ENCODE measurements at regions of chr1 and their contacts with region 1.

Region 1: GRCh38 chr1:58546520-58547308 is at the start of gene OMA1:
- DNase-seq: peak; percentile 97
- H3K4me3 ChIP-seq: peak within 1 kb of the TSS; percentile 19 to 73 (median 71)
- H3K27ac ChIP-seq: peak within 1 kb of the TSS; percentile 100
- H3K4me1 ChIP-seq: peaks cover 3 to 9% of the 10 kb centered on the region in 2 donors
- H3K27me3 ChIP-seq: no peaks in the 10 kb centered on the region
- CTCF ChIP-seq: peak; percentile 95 to 99 (median 97)
- POLR2A ChIP-seq: peak; percentile 81 to 95
- total RNA-seq, gene OMA1: 50.6 to 67.6 (median 58.5) TPM

Region 2: DNA sequence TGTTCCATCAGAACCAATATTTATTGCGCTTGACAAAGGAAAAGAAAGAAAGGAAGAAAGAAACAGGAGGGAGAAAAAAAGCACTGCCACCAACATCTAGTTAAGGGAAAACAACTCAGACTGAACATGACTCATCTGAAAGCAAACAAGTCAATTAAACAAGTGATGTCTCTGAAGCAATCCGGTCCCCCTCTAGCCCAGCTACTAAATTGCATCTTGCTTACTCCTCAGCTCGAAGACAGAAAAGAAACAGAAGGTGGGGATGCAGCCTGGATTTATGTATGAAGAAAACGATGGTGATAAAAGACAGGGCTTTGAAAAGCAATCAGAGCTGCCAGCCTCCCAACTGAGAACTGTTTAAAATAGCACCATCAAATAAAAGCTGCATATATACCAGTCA is 188.4 kb before region 1 on chr1:
- intact Hi-C with region 1: no loop called
- DNase-seq: no peak
- H3K4me3 ChIP-seq: no peak overlapping the region
- H3K27ac ChIP-seq: no peak overlapping the region
- H3K4me1 ChIP-seq: no peaks in the 10 kb centered on the region
- H3K27me3 ChIP-seq: no peaks in the 10 kb centered on the region
- CTCF ChIP-seq: no peak
- POLR2A ChIP-seq: no peak

Region 3: GRCh38 chr1:58513956-58514355 is 32.8 kb before region 1 on chr1:
- intact Hi-C with region 1: loop called (anchors 5 kb)
- DNase-seq: no peak
- H3K4me3 ChIP-seq: no peak overlapping the region
- H3K27ac ChIP-seq: no peak overlapping the region
- H3K4me1 ChIP-seq: no peaks in the 10 kb centered on the region
- H3K27me3 ChIP-seq: no peaks in the 10 kb centered on the region
- CTCF ChIP-seq: no peak
- POLR2A ChIP-seq: no peak

Region 4: DNA sequence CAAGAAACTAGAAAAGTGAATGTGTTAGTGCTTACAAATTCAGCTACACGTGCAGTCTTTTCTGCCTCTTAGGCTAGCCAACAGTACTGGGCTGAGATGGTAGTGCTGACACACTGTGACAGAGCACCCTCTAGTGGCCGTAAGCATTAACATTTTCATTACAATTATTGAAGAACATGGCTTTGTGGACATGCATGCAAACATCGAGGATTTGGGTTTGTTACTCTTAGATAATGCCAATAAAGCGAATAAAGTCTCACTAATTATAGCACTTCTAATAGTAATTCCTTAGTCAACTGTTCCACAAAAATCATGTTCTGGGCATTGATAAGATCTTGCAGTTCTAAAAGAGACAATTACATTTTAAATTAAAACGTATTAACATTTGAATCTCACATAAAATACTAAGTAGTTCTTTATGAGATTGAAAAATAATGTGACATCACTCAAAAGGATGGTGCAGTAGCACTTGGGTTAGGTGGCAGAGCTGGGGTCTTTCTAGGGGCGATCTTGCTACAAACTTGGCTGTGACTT is 106.0 kb after region 1 on chr1:
- intact Hi-C with region 1: loop called (anchors 10 kb)
- DNase-seq: peak; percentile 53 to 67
- H3K4me3 ChIP-seq: no peak overlapping the region
- H3K27ac ChIP-seq: no peak overlapping the region
- H3K4me1 ChIP-seq: no peaks in the 10 kb centered on the region
- H3K27me3 ChIP-seq: no peaks in the 10 kb centered on the region
- CTCF ChIP-seq: peak; percentile 61 to 94 (median 76)
- POLR2A ChIP-seq: no peak

Region 5: GRCh38 chr1:58688931-58689566 is 142.3 kb after region 1 on chr1:
- intact Hi-C with region 1: no loop called
- DNase-seq: no peak
- H3K4me3 ChIP-seq: no peak overlapping the region
- H3K27ac ChIP-seq: no peak overlapping the region
- H3K4me1 ChIP-seq: no peaks in the 10 kb centered on the region
- H3K27me3 ChIP-seq: no peaks in the 10 kb centered on the region
- CTCF ChIP-seq: no peak
- POLR2A ChIP-seq: no peak

Region 6: GRCh38 chr1:58739856-58740466 is 193.2 kb after region 1 on chr1:
- intact Hi-C with region 1: no loop called
- DNase-seq: no peak
- H3K4me3 ChIP-seq: no peak overlapping the region
- H3K27ac ChIP-seq: no peak overlapping the region
- H3K4me1 ChIP-seq: no peaks in the 10 kb centered on the region
- H3K27me3 ChIP-seq: no peaks in the 10 kb centered on the region
- CTCF ChIP-seq: peak; percentile 56 to 88 (median 78)
- POLR2A ChIP-seq: no peak